ENCODE measurements at regions of chr6 and their contacts with region 1.

Region 1: DNA sequence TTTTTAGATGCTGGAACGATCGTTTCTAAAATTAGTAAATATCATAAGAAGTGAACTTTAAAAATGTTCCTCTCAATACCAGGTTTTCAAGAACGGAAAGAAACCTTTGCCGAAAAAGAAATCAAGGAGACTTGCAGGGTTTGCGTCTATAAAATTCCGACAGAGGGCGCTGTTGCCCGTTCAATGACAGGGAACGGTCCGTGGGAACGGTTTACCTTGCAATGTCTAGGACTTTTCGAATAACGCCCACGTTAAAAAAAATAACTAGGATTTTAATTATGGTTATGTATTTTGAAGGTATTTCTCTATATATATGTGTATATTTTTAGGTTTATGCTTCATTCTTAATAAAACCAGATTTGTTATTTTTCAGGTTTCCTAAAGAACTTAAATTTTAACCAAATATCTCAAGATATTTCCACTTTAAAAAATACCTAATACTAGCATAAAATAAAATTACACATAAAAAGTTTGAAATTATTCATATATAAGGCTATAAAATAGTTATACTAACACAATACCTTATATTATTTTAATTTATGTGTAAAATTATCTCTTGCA is 2.5 kb upstream of the TFAP2B start:
- DNase-seq: peak; percentile 60
- ATAC-seq: peak; percentile 86
- H3K4me3 ChIP-seq: peak overlapping the region; percentile 59 to 71
- H3K27ac ChIP-seq: no peak overlapping the region
- H3K4me1 ChIP-seq: no peaks in the 10 kb centered on the region
- H3K27me3 ChIP-seq: peaks cover 20% of the 10 kb centered on the region
- CTCF ChIP-seq: peak; percentile 82

Region 2: GRCh38 chr6:49685455-49685854 is 1130.7 kb before region 1 on chr6:
- CTCF ChIA-PET with region 1: no interaction called
- POLR2A ChIA-PET with region 1: no interaction called
- in situ Hi-C with region 1: no loop called
- intact Hi-C with region 1: no loop called
- DNase-seq: no peak
- ATAC-seq: no peak
- H3K4me3 ChIP-seq: no peak overlapping the region
- H3K27ac ChIP-seq: no peak overlapping the region
- H3K4me1 ChIP-seq: no peaks in the 10 kb centered on the region
- H3K27me3 ChIP-seq: no peaks in the 10 kb centered on the region
- CTCF ChIP-seq: no peak

Region 3: DNA sequence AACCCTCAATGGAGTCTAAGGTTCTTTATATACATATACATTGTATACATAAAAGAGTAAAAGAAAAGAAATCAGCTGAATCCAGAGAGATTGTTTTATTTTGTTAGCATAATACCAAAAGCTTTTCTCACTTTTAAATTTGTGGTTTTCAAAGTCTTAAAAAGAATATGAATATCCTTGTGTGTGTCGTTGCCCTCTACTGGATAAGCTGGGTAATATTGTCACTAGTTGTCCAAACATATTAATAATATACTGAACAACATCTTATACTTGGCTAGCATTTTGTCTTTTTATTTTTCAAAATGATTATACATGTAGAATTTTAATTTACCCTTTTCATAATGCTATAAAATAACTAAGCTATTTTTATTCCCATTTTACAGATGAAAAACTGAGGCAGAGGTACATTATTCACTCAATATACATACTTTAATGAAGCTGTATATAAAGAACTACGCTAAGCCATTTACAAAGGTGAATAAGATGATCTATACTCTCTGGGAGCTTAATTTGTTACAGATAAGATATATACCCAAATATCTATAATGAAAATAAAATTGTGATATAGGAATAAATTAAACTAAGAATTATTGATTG is 534.2 kb after region 1 on chr6:
- CTCF ChIA-PET with region 1: no interaction called
- POLR2A ChIA-PET with region 1: no interaction called
- in situ Hi-C with region 1: no loop called
- intact Hi-C with region 1: loop called (anchors 5 kb)
- DNase-seq: no peak
- ATAC-seq: no peak
- H3K4me3 ChIP-seq: no peak overlapping the region
- H3K27ac ChIP-seq: no peak overlapping the region
- H3K4me1 ChIP-seq: no peaks in the 10 kb centered on the region
- H3K27me3 ChIP-seq: no peaks in the 10 kb centered on the region
- CTCF ChIP-seq: peak; percentile 30; the same call in 1 of the 2 replicates

Region 4: DNA sequence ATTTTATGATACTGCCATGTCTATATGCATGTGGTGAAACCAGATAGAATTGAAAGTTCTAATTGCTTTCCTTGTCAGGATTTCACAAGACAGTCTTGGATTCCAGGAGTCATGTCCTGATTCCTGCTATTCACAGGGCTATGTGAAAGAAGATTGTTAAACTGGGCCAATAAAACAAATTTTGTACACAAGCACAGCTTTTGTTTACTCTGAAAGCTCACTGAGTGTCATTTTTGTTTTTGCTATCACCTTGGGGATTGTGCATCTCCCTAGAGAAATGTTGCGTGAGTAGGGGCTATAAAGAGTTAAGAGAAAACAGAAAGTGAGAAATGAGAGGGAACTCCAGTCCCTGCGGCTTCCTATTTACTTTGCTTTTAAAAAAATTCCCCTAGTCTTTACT is 643.8 kb after region 1 on chr6:
- CTCF ChIA-PET with region 1: no interaction called
- POLR2A ChIA-PET with region 1: no interaction called
- in situ Hi-C with region 1: no loop called
- intact Hi-C with region 1: no loop called
- DNase-seq: no peak
- ATAC-seq: no peak
- H3K4me3 ChIP-seq: no peak overlapping the region
- H3K27ac ChIP-seq: no peak overlapping the region
- H3K4me1 ChIP-seq: no peaks in the 10 kb centered on the region
- H3K27me3 ChIP-seq: no peaks in the 10 kb centered on the region
- CTCF ChIP-seq: no peak

Region 5: GRCh38 chr6:51541847-51542246 is 725.7 kb after region 1 on chr6:
- CTCF ChIA-PET with region 1: no interaction called
- POLR2A ChIA-PET with region 1: no interaction called
- in situ Hi-C with region 1: no loop called
- intact Hi-C with region 1: loop called (anchors 2 kb)
- DNase-seq: no peak
- ATAC-seq: no peak
- H3K4me3 ChIP-seq: no peak overlapping the region
- H3K27ac ChIP-seq: no peak overlapping the region
- H3K4me1 ChIP-seq: no peaks in the 10 kb centered on the region
- H3K27me3 ChIP-seq: no peaks in the 10 kb centered on the region; the same call in 1 of the 2 replicates
- CTCF ChIP-seq: no peak; the same call in 1 of the 2 replicates

Region 6: DNA sequence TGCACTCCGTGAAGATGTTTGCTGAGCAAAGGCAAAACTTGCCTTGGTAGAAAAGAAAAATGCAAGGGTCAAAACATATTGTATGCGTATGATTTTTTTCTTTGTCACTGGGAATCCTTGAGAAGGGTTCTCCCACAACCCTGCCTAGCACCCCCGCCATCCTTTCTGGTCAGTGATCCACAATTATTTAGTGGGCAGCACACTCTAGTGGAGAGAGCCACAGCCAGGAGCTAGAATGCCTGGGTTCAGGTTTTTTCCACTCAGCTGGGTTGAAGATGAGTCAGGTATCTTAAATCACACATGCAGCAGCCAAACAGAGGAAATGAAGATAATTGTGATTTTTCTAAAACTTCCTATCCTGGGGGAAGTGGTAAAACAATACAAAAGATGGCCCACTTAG is 1028.1 kb after region 1 on chr6:
- CTCF ChIA-PET with region 1: no interaction called
- POLR2A ChIA-PET with region 1: no interaction called
- in situ Hi-C with region 1: no loop called
- intact Hi-C with region 1: loop called (anchors 5 kb)
- DNase-seq: no peak
- ATAC-seq: no peak
- H3K4me3 ChIP-seq: no peak overlapping the region
- H3K27ac ChIP-seq: no peak overlapping the region
- H3K4me1 ChIP-seq: peaks cover 3% of the 10 kb centered on the region; the same call in 1 of the 2 replicates
- H3K27me3 ChIP-seq: no peaks in the 10 kb centered on the region
- CTCF ChIP-seq: peak; percentile 36

Region 7: GRCh38 chr6:51959744-51960383 is 1143.7 kb after region 1 on chr6:
- CTCF ChIA-PET with region 1: no interaction called
- POLR2A ChIA-PET with region 1: no interaction called
- in situ Hi-C with region 1: no loop called
- intact Hi-C with region 1: loop called (anchors 5 kb)
- DNase-seq: peak; percentile 58
- ATAC-seq: peak; percentile 86
- H3K4me3 ChIP-seq: no peak overlapping the region
- H3K27ac ChIP-seq: no peak overlapping the region
- H3K4me1 ChIP-seq: no peaks in the 10 kb centered on the region
- H3K27me3 ChIP-seq: no peaks in the 10 kb centered on the region
- CTCF ChIP-seq: peak; percentile 90

Region 8: GRCh38 chr6:52020945-52021570 is 1204.9 kb after region 1 on chr6:
- CTCF ChIA-PET with region 1: no interaction called
- POLR2A ChIA-PET with region 1: no interaction called
- in situ Hi-C with region 1: no loop called
- intact Hi-C with region 1: loop called (anchors 5 kb)
- DNase-seq: no peak
- ATAC-seq: no peak
- H3K4me3 ChIP-seq: no peak overlapping the region
- H3K27ac ChIP-seq: no peak overlapping the region
- H3K4me1 ChIP-seq: no peaks in the 10 kb centered on the region
- H3K27me3 ChIP-seq: no peaks in the 10 kb centered on the region; the same call in none of the 2 replicates
- CTCF ChIP-seq: peak; percentile 59; the same call in 1 of the 2 replicates